ENCODE measurements at regions of chrX and their contacts with region 1.

Region 1: DNA sequence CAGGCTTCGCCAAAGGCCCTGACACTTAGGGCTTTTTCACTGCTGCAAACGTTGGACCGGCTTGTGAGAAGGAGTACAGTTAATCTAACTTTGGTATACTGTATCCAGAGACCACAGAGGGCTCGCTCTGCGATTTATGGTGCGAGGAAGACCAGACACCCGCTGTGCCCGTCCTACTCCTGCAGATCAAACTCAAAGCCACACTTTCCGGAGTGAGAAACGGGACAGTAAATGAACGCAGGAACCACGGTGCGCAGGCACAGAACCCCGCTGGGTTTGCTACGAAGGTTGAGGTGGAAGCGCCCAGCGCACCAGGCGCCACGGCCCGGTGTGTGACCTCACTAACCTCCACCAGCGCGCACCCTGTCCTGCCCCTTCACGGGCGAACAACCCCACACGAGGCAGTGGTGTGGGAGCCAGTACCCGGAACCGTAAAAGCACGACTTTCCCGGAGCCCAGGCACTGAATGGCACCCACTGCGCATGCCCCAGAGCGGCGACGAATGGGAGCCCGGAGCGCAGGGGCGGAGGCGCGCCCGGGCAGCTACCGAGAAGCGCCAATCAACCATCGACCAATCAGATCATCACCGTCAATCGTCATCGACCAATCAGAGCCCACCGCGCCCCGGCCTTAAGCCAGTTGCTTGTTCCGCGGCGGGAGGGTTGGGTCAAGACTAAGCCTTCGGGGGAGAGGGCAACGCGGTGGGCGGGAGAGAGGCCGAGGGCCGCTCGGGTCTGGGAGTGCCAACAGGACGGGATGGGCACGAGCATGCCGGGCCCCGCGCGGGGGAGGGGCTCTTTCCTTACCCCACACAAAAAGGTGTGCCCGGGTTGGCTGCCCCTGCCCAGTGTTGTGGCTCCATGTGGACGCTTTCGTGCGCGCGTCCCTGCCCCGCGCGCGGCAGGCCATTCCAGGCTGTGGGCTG is 21.3 kb upstream of the WDR45 start:
- DNase-seq: peak; percentile 86
- H3K4me3 Mint-ChIP-seq: peak overlapping the region; percentile 90
- H3K27ac Mint-ChIP-seq: peak overlapping the region; percentile 87
- H3K4me1 Mint-ChIP-seq: no peaks in the 10 kb centered on the region
- H3K27me3 Mint-ChIP-seq: no peaks in the 10 kb centered on the region

Region 2: GRCh38 chrX:48972220-48973167 is 128.5 kb before region 1 on chrX:
- intact Hi-C with region 1: loop called (anchors 5 kb)
- DNase-seq: no peak
- H3K4me3 Mint-ChIP-seq: no peak overlapping the region
- H3K27ac Mint-ChIP-seq: no peak overlapping the region
- H3K4me1 Mint-ChIP-seq: peaks cover 15% of the 10 kb centered on the region
- H3K27me3 Mint-ChIP-seq: no peaks in the 10 kb centered on the region

Region 3: GRCh38 chrX:49002091-49002935 is 98.7 kb before region 1 on chrX and contains the start of gene GRIPAP1:
- intact Hi-C with region 1: loop called (anchors 1 kb)
- DNase-seq: peak; percentile 68
- H3K4me3 Mint-ChIP-seq: peak within 1 kb of the TSS; percentile 99
- H3K27ac Mint-ChIP-seq: peak within 1 kb of the TSS; percentile 96
- H3K4me1 Mint-ChIP-seq: peaks cover 35% of the 10 kb centered on the region
- H3K27me3 Mint-ChIP-seq: no peaks in the 10 kb centered on the region
- total RNA-seq, gene GRIPAP1: 85.8 and 89.2 TPM in 2 replicates

Region 4: DNA sequence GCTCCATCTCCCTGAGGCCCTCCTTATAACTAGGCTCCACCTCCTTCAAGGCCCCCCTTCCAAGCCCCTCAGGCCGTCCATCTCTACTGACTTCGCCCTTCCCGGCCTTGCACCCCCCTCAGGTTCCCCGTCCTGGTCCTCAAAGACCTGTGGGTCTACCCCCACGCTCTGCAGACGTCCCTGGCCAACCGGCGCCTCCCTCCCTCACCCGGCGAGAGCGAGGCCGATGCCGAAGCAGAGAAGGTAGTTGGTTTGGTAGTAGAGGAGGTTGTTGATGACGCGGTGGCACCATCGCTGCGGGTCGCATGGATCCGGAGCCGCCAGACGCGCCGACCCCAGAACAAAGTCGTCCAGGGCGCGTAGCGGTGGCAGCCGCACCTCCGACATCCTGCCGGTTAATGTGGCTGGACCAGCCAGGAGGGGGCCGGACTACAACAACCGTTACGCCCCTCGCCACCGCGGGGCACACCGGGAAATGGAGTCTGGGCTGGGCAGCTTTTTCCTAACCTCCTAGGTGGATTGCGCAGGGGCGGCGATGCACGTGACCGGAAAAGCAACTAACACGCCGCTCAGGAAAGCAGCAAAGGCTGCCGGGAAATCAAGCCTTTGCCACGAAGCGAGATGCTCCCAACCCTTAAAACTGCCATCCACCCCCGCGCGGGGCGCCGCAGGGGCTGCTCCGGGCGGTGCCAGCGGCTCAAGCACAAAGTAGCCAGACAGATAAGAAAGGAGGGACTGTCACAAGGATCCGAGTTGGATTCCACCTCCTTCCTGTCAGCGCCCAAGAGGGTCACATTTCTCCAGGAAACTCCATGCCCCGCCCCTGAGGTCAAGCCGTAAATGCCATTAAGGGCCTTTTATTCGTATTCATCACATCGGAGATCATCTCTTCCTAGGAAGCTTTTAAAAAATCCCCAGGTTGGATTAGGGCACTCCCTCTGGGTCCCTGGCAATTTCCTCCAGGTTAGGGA is 27.1 kb before region 1 on chrX and contains the start of gene PRAF2:
- intact Hi-C with region 1: loop called (anchors 1 kb)
- DNase-seq: peak; percentile 84
- H3K4me3 Mint-ChIP-seq: peak within 1 kb of the TSS; percentile 84
- H3K27ac Mint-ChIP-seq: peak within 1 kb of the TSS; percentile 74
- H3K4me1 Mint-ChIP-seq: peaks cover 12% of the 10 kb centered on the region
- H3K27me3 Mint-ChIP-seq: no peaks in the 10 kb centered on the region
- total RNA-seq, gene PRAF2: 14.9 and 15.4 TPM in 2 replicates

Region 5: DNA sequence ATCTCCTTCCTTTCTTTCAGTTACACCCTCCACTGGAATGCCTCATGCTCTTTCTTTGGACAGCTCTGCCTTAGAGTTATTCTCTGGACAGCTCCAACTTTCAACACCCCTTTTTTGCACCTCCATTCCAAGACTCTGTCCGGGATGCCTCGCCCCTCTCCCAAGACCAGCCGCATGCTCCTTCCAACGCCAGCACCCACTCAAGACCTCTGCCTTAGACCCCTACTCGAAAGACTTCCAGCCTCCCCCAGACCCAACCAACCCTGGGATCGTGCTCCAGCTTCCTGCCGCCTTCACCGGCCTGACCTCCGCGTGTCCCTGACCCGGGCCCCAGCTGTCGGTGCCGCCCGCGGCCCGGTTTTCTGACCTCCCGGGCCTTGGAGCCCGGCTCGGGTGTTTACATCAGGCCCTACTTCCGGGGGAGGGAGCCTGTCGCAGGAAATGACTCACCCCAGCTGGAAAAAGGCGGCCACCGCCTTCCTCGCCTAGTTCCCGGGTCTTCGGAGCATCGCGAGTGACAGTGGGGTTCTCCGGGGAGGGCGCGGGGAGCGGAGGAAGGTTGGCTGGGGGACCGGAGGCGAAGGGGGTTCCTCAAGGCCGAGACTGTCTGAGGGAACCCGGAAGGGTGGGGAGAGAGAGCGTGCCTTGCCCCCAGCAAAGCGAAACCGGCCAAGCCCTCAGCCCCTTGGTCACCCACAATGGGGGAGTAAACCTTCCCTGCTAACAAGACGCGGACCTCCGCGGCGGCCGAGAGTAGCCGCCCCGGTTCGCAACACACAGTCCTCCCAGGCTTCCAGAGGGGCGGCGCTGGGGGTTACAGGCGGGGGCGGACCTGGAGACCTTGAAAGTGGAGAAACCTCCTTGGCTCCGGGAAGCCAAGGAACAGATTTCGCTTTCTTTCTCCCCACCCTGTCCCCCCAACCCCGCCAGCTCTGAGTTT is 21.2 kb before region 1 on chrX and contains the start of gene WDR45:
- intact Hi-C with region 1: loop called (anchors 1 kb)
- DNase-seq: peak; percentile 68
- H3K4me3 Mint-ChIP-seq: peak within 1 kb of the TSS; percentile 99
- H3K27ac Mint-ChIP-seq: peak within 1 kb of the TSS; percentile 93
- H3K4me1 Mint-ChIP-seq: peaks cover 12% of the 10 kb centered on the region
- H3K27me3 Mint-ChIP-seq: no peaks in the 10 kb centered on the region
- total RNA-seq, gene WDR45: 49.1 and 53.0 TPM in 2 replicates

Region 6: GRCh38 chrX:49120099-49120498 is 19.1 kb after region 1 on chrX:
- intact Hi-C with region 1: loop called (anchors 1 kb)
- DNase-seq: no peak
- H3K4me3 Mint-ChIP-seq: peak overlapping the region; percentile 69
- H3K27ac Mint-ChIP-seq: peak overlapping the region; percentile 71
- H3K4me1 Mint-ChIP-seq: peaks cover 40% of the 10 kb centered on the region
- H3K27me3 Mint-ChIP-seq: no peaks in the 10 kb centered on the region

Measured in activated T-helper 1 cell treated with anti-CD3 and anti-CD28 coated beads, Interleukin-12 subunit alpha, Interleukin-12 subunit beta, Interleukin-2, Interleukin-4 antibody, amounts not matched to agents 30 ng/mL and 10 ng/mL and 1 ng/mL, durations not matched to agents 14 hours and 24 hours and 36 hours (primary cell).